ENCODE measurements at regions of chr5 and their contacts with region 1.

Region 1: GRCh38 chr5:144191998-144192397 is 21.3 kb downstream of the KCTD16 start:
- DNase-seq: no peak
- H3K4me3 Mint-ChIP-seq: no peak overlapping the region
- H3K27ac Mint-ChIP-seq: no peak overlapping the region
- H3K4me1 Mint-ChIP-seq: peaks cover 31% of the 10 kb centered on the region
- H3K27me3 Mint-ChIP-seq: no peaks in the 10 kb centered on the region

Region 2: DNA sequence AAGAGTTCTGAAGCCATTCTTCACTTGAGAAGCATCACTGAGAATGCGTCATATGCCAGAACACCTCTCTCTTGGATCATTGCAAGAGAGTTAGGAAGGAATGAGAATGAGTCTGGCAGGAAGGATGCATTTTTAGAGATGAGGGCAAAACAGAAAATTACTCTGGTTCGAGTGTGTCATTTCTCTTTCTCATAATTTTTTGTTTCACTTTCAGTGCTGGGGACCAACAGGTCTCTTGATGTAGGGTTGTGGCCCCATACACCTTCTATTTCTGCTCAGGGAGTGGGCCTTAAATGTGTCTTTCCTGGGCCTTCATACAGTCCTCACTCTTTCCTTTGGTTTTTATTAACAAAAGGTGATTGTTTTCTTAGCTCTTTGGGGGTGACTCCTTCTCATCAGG is 1090.9 kb before region 1 on chr5:
- CTCF ChIA-PET with region 1: no interaction called
- POLR2A ChIA-PET with region 1: no interaction called
- intact Hi-C with region 1: loop called (anchors 2 kb)
- DNase-seq: peak; percentile 23
- H3K4me3 Mint-ChIP-seq: no peak overlapping the region
- H3K27ac Mint-ChIP-seq: peak overlapping the region; percentile 90
- H3K4me1 Mint-ChIP-seq: peaks cover 40% of the 10 kb centered on the region
- H3K27me3 Mint-ChIP-seq: no peaks in the 10 kb centered on the region

Region 3: GRCh38 chr5:143403593-143404415 is 788.2 kb before region 1 on chr5 and contains the start of gene NR3C1:
- CTCF ChIA-PET with region 1: interaction called, 5 read pairs
- POLR2A ChIA-PET with region 1: no interaction called
- intact Hi-C with region 1: loop called (anchors 1 kb)
- DNase-seq: peak; percentile 87
- H3K4me3 Mint-ChIP-seq: peak within 1 kb of the TSS; percentile 89
- H3K27ac Mint-ChIP-seq: peak within 1 kb of the TSS; percentile 100
- H3K4me1 Mint-ChIP-seq: peaks cover 47% of the 10 kb centered on the region
- H3K27me3 Mint-ChIP-seq: no peaks in the 10 kb centered on the region
- total RNA-seq, gene NR3C1: 48.6 to 53.9 TPM

Region 4: DNA sequence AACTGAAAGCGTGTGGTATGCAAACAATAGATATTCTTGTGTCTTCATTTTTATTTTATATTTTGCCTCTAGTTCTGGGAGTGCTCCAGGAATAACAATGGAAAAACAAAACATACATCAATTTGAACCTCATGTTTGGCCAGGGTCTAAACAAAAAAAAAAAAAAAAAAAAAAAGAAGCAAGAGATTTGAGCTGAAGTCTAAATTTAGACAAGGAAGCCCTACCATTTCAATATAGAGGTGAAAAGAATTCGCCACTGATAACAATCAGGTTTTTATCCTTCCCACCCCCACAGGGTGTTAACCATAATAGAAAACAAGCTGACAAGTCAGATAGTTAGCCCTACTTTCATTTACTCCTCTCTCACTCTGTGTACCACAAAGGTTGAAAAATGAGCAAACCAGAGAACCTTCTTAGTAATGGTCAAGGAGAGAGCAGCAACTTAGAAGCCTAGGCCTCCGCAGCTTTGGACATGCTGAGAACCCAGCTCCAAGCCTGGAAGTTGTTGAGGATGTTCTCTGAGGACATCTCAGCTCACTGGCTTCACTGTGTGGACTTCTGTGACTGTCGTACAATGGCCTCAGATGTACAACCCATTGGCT is 498.2 kb before region 1 on chr5:
- CTCF ChIA-PET with region 1: no interaction called
- POLR2A ChIA-PET with region 1: no interaction called
- intact Hi-C with region 1: loop called (anchors 2 kb)
- DNase-seq: peak; percentile 22
- H3K4me3 Mint-ChIP-seq: no peak overlapping the region
- H3K27ac Mint-ChIP-seq: no peak overlapping the region
- H3K4me1 Mint-ChIP-seq: peaks cover 21% of the 10 kb centered on the region
- H3K27me3 Mint-ChIP-seq: peaks cover 4% of the 10 kb centered on the region

Region 5: DNA sequence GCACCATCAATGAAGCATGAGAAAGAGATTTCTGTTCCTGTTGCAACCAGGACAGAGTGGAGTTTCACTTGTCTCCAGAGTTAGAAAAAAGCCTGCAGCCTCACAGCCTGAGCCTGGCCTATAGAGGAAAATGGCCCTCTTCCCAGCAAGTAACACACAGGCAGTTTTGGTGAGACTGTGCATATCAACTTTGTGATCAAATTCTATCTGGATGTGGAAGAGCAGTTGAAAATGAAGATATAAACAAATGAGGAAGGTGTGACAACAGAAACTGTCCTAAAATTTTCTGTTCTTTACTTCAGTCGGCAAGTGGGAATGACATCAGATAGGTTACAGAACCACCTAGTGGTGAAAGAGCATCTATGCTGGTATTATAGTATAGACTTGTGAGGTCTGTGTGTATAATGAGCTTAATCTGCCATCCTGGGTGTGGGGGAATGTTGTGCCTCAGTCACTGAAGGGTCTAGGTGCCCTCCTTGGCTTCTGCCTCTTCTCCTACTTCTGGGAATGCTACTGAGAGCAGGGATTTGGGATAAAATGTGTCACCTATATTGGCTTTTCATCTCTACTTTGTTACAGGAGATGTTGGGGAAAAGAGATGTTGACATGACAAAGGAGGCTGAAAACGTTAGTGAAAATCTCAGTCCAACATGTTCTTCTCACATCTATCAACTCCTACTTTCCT is 49.7 kb before region 1 on chr5:
- CTCF ChIA-PET with region 1: interaction called, 4 read pairs
- POLR2A ChIA-PET with region 1: no interaction called
- intact Hi-C with region 1: loop called (anchors 2 kb)
- DNase-seq: no peak
- H3K4me3 Mint-ChIP-seq: no peak overlapping the region
- H3K27ac Mint-ChIP-seq: no peak overlapping the region
- H3K4me1 Mint-ChIP-seq: peaks cover 3% of the 10 kb centered on the region
- H3K27me3 Mint-ChIP-seq: peaks cover 4% of the 10 kb centered on the region

Region 6: DNA sequence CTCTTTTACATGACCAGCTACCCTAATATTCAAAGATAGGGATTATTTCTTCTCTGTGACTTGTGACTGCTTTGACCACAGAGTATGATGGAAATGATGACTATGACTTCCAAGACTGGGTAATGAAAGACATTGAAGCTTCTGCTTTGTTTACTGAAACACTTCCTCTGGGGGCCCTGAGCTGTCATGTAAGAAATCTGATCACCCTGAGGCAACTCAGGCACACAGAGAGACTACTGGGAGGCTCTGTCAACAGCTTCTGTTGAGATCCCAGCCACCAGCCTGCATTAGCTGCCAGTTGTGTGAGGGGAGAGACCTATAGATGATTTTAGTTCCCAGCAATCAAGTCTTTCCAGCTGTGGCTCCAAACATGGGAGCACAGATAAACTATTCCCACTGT is 55.1 kb after region 1 on chr5:
- CTCF ChIA-PET with region 1: no interaction called
- POLR2A ChIA-PET with region 1: no interaction called
- intact Hi-C with region 1: no loop called
- DNase-seq: no peak
- H3K4me3 Mint-ChIP-seq: no peak overlapping the region
- H3K27ac Mint-ChIP-seq: no peak overlapping the region
- H3K4me1 Mint-ChIP-seq: no peaks in the 10 kb centered on the region
- H3K27me3 Mint-ChIP-seq: peaks cover 3% of the 10 kb centered on the region

Region 7: GRCh38 chr5:144484124-144484897 is 292.3 kb after region 1 on chr5:
- CTCF ChIA-PET with region 1: no interaction called
- POLR2A ChIA-PET with region 1: no interaction called
- intact Hi-C with region 1: no loop called
- DNase-seq: no peak
- H3K4me3 Mint-ChIP-seq: no peak overlapping the region
- H3K27ac Mint-ChIP-seq: no peak overlapping the region
- H3K4me1 Mint-ChIP-seq: no peaks in the 10 kb centered on the region
- H3K27me3 Mint-ChIP-seq: no peaks in the 10 kb centered on the region

Region 8: DNA sequence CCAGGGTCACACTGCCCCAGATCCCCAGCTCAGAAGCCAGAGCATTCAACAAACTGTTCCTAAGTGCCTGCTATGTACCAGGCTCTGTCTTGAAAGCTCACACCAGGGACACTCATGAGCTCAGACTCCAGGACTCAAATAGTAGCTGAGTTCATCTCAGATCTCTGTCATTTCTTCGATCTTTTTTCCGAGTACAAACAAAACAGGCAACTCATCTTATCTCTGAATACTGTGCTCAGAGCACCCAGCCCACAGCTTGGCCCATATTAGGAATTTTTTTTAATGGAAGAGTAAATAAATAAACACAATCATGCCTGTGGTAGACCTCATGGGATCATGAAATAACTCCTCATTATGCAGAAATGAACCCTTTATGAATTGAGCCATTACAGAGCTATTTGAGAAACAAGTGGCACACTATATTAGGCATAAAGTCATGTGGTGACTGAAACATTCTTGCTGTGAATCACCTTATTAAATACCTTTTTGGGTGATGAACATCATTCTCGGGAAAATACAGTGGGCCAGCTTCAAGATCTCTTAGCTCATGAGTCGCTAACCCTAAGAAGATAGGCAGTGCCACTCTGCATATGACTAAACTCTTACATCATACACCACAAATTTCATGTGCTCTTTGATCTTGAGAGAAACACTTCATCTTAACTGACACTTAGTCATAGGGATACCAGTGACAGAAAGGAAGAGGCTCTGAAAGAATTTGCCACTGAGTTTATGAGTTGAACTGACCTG is 1754.3 kb after region 1 on chr5:
- CTCF ChIA-PET with region 1: no interaction called
- POLR2A ChIA-PET with region 1: no interaction called
- intact Hi-C with region 1: loop called (anchors 2 kb)
- DNase-seq: no peak
- H3K4me3 Mint-ChIP-seq: peak overlapping the region; percentile 2
- H3K27ac Mint-ChIP-seq: no peak overlapping the region
- H3K4me1 Mint-ChIP-seq: peaks cover 27% of the 10 kb centered on the region
- H3K27me3 Mint-ChIP-seq: peaks cover 26% of the 10 kb centered on the region

Measured in activated CD4-positive, alpha-beta memory T cell treated with anti-CD3 and anti-CD28 coated beads for 36 hours (primary cell).